Activated T-helper 2 cell treated with anti-CD3 and anti-CD28 coated beads, Interferon-gamma antibody, Interleukin-2, Interleukin-4, amounts not matched to agents 10 μg/mL and 5 μg/mL and 100 μg/mL, durations not matched to agents 14 hours and 24 hours and 36 hours (primary cell): ENCODE measurements at regions of chr5 and their contacts with region 1.

Region 1: GRCh38 chr5:159515909-159516415 is 185.7 kb upstream of the IL12B start:
- DNase-seq: peak; percentile 50
- H3K4me3 Mint-ChIP-seq: no peak overlapping the region
- H3K27ac Mint-ChIP-seq: no peak overlapping the region
- H3K4me1 Mint-ChIP-seq: peaks cover 7% of the 10 kb centered on the region
- H3K27me3 Mint-ChIP-seq: peaks cover 14% of the 10 kb centered on the region

Region 2: DNA sequence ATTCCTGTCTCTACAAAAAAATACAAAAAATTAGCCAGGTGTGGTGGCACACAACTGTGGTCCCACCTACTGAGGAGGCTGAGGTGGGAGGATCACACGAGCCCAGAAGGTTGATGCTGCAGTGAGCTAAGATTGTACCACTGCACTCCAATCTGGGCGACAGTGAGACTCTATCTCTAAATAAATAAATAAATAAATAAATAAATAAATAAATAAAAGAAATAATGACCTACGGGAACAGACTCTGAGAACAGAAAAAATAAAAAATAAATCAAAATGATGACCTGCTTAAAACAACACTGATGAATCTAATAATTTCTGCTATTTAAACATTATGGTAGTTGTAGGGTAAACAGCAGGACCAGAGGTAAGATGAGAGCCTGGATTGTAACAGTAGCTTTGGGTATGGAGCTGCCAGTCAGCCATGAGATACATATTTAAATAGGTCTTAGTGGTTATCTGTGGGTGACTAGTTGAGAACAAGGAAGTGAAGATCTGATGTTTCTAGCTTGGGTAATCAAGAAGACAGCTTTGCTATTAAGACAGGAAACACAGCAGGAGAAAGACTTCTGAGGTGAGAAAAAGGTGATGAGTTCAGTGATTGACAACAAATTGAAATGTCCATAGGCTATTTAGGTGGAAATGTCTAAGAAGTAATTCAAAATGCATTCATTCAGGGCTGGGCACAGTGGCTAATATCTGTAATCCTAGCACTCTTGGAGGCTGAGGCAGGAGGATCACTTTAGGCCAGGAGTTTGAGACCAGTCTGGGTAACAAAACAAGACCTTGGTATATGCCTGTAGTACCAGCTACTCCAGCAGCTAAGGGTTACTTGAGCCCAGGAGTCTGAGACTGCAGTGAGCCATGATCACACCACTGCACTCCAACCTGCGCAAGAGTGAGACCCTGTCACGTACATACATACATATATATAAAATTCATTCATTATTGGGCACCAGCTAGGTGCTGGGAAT is 317.6 kb before region 1 on chr5:
- intact Hi-C with region 1: no loop called
- DNase-seq: no peak
- H3K4me3 Mint-ChIP-seq: peak overlapping the region; percentile 24
- H3K27ac Mint-ChIP-seq: peak overlapping the region; percentile 78
- H3K4me1 Mint-ChIP-seq: peaks cover 54% of the 10 kb centered on the region
- H3K27me3 Mint-ChIP-seq: no peaks in the 10 kb centered on the region

Region 3: GRCh38 chr5:159331093-159331973 is 184.6 kb before region 1 on chr5:
- intact Hi-C with region 1: loop called (anchors 5 kb)
- DNase-seq: peak; percentile 64
- H3K4me3 Mint-ChIP-seq: peak overlapping the region; percentile 54
- H3K27ac Mint-ChIP-seq: no peak overlapping the region
- H3K4me1 Mint-ChIP-seq: peaks cover 29% of the 10 kb centered on the region
- H3K27me3 Mint-ChIP-seq: peaks cover 41% of the 10 kb centered on the region

Region 4: GRCh38 chr5:159581502-159582249 is 65.7 kb after region 1 on chr5:
- intact Hi-C with region 1: no loop called
- DNase-seq: no peak
- H3K4me3 Mint-ChIP-seq: no peak overlapping the region
- H3K27ac Mint-ChIP-seq: no peak overlapping the region
- H3K4me1 Mint-ChIP-seq: no peaks in the 10 kb centered on the region
- H3K27me3 Mint-ChIP-seq: no peaks in the 10 kb centered on the region

Region 5: GRCh38 chr5:159965031-159965837 is 449.3 kb after region 1 on chr5:
- intact Hi-C with region 1: loop called (anchors 1 kb)
- DNase-seq: no peak
- H3K4me3 Mint-ChIP-seq: no peak overlapping the region
- H3K27ac Mint-ChIP-seq: no peak overlapping the region
- H3K4me1 Mint-ChIP-seq: no peaks in the 10 kb centered on the region
- H3K27me3 Mint-ChIP-seq: peaks cover 38% of the 10 kb centered on the region